ENCODE measurements at regions of chr7 and their contacts with region 1.

Region 1: DNA sequence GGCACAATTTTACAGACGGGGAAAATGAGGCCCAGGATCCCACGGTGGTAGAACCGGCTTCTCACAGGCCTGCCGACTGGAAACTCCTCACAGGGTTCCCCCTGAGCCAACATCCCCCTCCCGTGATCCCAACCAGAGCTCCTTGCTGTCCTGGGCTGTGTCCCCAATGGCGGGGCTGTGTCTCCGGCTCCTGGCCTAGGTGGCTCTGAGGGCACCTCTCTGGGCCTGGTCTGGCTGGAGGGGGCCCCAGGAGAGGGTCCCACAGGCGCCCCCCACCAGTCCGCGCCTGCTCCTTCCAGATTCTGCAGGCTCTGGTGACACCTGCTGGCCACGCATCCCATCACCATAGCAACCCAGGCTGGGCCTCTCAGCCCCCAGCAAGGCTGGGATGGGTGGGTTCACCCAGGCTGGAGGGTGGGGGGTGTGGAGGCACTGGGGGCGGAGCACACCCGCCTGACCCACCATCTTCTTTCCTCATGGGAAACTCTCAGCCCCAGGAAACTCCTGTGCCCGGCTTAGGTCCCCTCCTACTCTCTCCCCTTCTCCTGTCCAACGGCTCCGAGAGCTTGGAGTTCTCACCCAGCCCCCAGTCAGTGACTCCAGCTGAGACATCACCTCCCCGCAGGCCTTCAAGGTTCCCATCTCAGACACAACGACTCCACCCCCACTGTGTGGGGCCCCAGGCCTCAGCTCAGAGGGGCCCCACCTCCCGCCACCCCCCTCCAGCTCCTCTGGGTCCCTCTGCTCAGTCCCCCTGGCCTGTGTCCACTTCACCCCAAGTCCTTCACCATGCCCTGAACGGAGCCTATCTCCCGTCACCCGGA is 27.1 kb upstream of the TNRC18 start:
- DNase-seq: peak; percentile 61
- H3K4me3 Mint-ChIP-seq: no peak overlapping the region
- H3K27ac Mint-ChIP-seq: peak overlapping the region; percentile 61
- H3K4me1 Mint-ChIP-seq: peaks cover 9% of the 10 kb centered on the region
- H3K27me3 Mint-ChIP-seq: peaks cover 8% of the 10 kb centered on the region
- CTCF ChIP-seq: peak; percentile 91

Region 2: GRCh38 chr7:5363729-5364128 is 87.0 kb before region 1 on chr7:
- CTCF ChIA-PET with region 1: interaction called, 6 read pairs
- intact Hi-C with region 1: loop called (anchors 2 kb)
- DNase-seq: no peak
- H3K4me3 Mint-ChIP-seq: no peak overlapping the region
- H3K27ac Mint-ChIP-seq: no peak overlapping the region
- H3K4me1 Mint-ChIP-seq: peaks cover 2% of the 10 kb centered on the region
- H3K27me3 Mint-ChIP-seq: no peaks in the 10 kb centered on the region
- CTCF ChIP-seq: no peak

Region 3: DNA sequence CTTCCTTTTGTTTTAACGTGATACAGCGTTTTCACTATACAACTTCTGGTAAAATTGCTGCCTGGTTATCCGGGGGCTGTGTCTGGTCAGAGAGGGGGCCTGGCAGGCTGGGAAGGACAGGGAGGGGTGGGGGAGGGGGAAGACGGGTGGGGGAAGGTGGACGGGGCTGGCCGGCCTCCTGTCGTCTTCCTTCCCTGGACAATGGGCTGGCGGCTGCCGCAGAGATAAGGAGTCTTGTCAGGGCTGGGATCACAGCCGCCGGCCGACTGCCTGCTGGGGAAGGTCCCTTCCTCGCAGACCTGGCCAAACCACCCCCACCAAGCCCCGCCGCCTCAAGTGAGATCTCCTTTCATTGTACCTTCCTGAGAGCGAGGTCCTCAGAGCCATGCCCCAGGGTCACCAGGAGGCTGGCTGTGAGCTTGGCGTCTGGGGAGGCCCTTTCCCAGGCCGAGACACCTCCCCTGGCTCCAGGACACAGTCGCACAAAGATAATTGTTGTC is 124.1 kb after region 1 on chr7:
- CTCF ChIA-PET with region 1: no interaction called
- intact Hi-C with region 1: no loop called
- DNase-seq: no peak
- H3K4me3 Mint-ChIP-seq: no peak overlapping the region
- H3K27ac Mint-ChIP-seq: no peak overlapping the region
- H3K4me1 Mint-ChIP-seq: no peaks in the 10 kb centered on the region
- H3K27me3 Mint-ChIP-seq: peaks cover 51% of the 10 kb centered on the region
- CTCF ChIP-seq: no peak